HEK293 (cell line): ENCODE measurements at regions of chr1 and their contacts with region 1.

Region 1: GRCh38 chr1:12153181-12153785 is 13.5 kb upstream of the TNFRSF1B start:
- H3K4me3 ChIP-seq: no peak overlapping the region
- H3K27ac ChIP-seq: no peak overlapping the region
- H3K4me1 ChIP-seq: no peaks in the 10 kb centered on the region
- CTCF ChIP-seq: no peak

Region 2: GRCh38 chr1:12138196-12139168 is 14.8 kb before region 1 on chr1:
- CTCF ChIA-PET with region 1: no interaction called
- POLR2A ChIA-PET with region 1: no interaction called
- H3K4me3 ChIP-seq: no peak overlapping the region
- H3K27ac ChIP-seq: no peak overlapping the region
- H3K4me1 ChIP-seq: peaks cover under 1% of the 10 kb centered on the region; the same call in 1 of the 2 replicates
- CTCF ChIP-seq: no peak

Region 3: GRCh38 chr1:12171206-12172041 is 18.1 kb after region 1 on chr1:
- CTCF ChIA-PET with region 1: no interaction called
- POLR2A ChIA-PET with region 1: no interaction called
- H3K4me3 ChIP-seq: no peak overlapping the region
- H3K27ac ChIP-seq: no peak overlapping the region
- H3K4me1 ChIP-seq: no peaks in the 10 kb centered on the region
- CTCF ChIP-seq: no peak

Region 4: DNA sequence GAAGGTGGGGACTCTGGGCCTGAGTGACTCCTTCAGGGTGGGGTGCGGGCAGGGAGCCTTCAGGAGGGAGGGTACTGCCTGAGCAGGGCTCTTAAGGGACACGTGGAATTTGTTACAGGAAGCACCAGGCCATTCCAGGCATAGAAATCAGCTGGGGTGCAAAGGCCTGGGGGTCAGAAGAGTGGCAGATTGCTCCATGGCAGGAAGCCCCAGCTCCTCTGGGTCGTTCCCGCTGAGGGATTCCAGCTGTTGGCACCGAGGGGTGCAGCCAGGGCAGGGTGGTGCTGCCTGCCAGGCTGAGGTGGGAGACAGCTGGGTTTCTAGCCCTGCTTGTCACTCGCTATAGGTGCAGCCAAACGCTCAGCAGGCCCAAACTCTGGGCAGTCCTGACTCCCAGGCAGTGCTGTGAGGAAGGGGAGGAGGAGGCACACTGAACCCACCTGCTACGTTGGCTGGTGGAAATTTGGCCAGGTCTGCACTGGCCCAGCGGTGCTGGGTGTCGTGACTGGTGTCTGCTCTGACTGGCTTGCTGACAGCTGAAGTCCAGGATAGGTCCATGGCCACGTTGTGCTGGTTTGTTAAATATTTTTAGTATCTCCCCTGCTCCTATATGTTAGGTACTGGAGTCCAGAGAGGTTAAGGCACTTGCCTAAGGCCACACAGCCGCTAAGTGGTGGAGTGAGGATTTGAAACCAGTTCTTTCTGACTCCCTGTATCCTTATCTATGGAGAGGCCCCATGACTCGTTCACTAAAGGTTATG is 32.8 kb after region 1 on chr1:
- CTCF ChIA-PET with region 1: no interaction called
- POLR2A ChIA-PET with region 1: interaction called, 10 read pairs
- H3K4me3 ChIP-seq: no peak overlapping the region
- H3K27ac ChIP-seq: no peak overlapping the region
- H3K4me1 ChIP-seq: no peaks in the 10 kb centered on the region
- CTCF ChIP-seq: no peak